Activated T-helper 1 cell treated with anti-CD3 and anti-CD28 coated beads, Interleukin-12 subunit alpha, Interleukin-12 subunit beta, Interleukin-2, Interleukin-4 antibody, amounts not matched to agents 30 ng/mL and 10 ng/mL and 1 ng/mL, durations not matched to agents 14 hours and 24 hours and 36 hours (primary cell): ENCODE measurements at regions of chr6 and their contacts with region 1.

Region 1: GRCh38 chr6:41182069-41183034 is 18.6 kb downstream of the TREML2 start:
- DNase-seq: peak; percentile 41
- H3K4me3 Mint-ChIP-seq: no peak overlapping the region
- H3K27ac Mint-ChIP-seq: no peak overlapping the region
- H3K4me1 Mint-ChIP-seq: peaks cover 38% of the 10 kb centered on the region
- H3K27me3 Mint-ChIP-seq: peaks cover 1% of the 10 kb centered on the region

Region 2: DNA sequence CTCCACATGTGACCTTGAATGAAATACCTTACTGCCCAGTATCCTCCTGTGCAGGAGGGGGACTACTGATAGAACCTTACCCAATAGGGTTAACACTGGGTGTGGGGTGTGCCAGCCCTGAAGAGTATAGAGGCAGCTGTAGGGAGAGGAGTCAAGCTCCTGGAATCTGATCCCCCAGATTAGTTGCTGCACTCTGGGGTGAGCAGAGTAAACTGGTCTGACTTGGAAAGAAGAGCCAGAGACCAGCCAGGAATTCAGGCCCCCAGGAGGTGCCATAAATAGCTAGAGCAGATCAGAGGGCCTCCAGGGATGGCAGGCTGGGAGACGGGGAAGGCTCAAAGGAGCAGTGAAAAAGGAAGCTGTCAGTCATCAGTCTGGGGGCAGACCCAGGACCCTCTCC is 132.8 kb before region 1 on chr6:
- intact Hi-C with region 1: no loop called
- DNase-seq: no peak
- H3K4me3 Mint-ChIP-seq: no peak overlapping the region
- H3K27ac Mint-ChIP-seq: no peak overlapping the region
- H3K4me1 Mint-ChIP-seq: peaks cover 16% of the 10 kb centered on the region
- H3K27me3 Mint-ChIP-seq: no peaks in the 10 kb centered on the region

Region 3: GRCh38 chr6:41092421-41093140 is 89.8 kb before region 1 on chr6:
- intact Hi-C with region 1: loop called (anchors 1 kb)
- DNase-seq: no peak
- H3K4me3 Mint-ChIP-seq: no peak overlapping the region
- H3K27ac Mint-ChIP-seq: no peak overlapping the region
- H3K4me1 Mint-ChIP-seq: peaks cover 10% of the 10 kb centered on the region
- H3K27me3 Mint-ChIP-seq: no peaks in the 10 kb centered on the region